Gastrocnemius medialis (tissue), 4 donors: ENCODE measurements at regions of chr12 and their contacts with region 1.

Region 1: GRCh38 chr12:68158432-68158831 is 1.1 kb downstream of the IFNG start:
- DNase-seq: no peak
- ATAC-seq: no peak
- H3K4me3 ChIP-seq: no peak overlapping the region
- H3K27ac ChIP-seq: no peak overlapping the region
- H3K4me1 ChIP-seq: no peaks in the 10 kb centered on the region
- H3K27me3 ChIP-seq: no peaks in the 10 kb centered on the region
- CTCF ChIP-seq: peak in 4 of 5 experiments; percentile 6 to 51 (median 28)
- POLR2A ChIP-seq: no peak

Region 2: GRCh38 chr12:68067762-68068376 is 90.6 kb before region 1 on chr12:
- in situ Hi-C with region 1: loop called in 1 of 4 experiments (anchors 25 kb)
- intact Hi-C with region 1: no loop called
- DNase-seq: no peak
- ATAC-seq: no peak
- H3K4me3 ChIP-seq: no peak overlapping the region
- H3K27ac ChIP-seq: no peak overlapping the region
- H3K4me1 ChIP-seq: no peaks in the 10 kb centered on the region
- H3K27me3 ChIP-seq: no peaks in the 10 kb centered on the region
- CTCF ChIP-seq: peak in 1 of 5 experiments; percentile 7
- POLR2A ChIP-seq: no peak